CD14-positive monocyte (primary cell): ENCODE measurements at regions of chr4 and their contacts with region 1.

Region 1: DNA sequence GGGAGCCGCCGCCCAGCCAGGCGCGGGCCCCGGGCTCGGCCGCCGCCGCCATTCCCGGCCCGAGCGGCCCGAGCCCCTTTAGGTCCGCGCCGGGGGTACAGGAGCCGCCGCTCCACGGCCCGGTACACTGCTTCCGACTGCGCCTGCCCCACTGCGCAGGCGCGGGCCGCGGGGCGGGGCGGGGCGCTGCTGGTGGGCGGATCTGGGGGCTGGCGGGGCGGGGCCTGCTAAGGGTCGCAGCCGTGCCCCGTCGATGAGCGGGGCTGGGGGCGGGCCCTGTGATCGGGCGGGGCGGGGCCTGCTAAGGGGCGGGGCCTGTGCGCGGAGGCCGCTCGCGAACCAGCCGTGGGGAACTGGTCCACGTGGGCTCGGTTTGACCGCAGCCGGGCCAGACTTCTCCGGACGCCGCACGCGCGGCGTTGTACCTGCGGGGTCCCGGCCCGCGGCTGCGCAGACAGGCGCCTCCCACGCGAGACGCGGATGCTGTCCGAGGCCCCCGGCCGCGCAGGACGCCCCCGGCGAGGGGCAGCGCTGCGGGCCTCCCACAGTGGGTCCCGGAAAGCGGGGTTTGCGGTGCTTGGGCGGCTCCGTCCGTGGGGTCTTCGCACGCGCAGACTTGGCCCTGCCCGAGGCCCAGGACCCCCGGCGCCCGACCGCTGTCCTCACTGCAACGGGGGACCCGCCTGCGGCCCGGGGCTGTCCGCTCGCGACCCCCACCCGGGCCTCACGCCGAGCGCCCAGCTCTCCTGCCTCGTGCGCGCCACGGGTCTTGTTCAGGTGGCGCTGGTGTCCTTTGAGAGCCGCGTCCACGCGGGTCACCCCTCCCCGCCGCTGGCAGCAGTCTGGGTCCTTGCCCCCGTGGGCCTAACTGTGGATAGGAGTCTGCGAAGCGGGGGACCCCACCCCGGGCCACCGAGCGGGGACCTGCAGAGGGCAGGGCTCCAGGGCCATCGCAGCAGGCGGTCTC is at the start of gene DGKQ:
- DNase-seq: peak; percentile 85 to 93 (median 89)
- H3K4me3 ChIP-seq: peak within 1 kb of the TSS; percentile 46 to 90 (median 87)
- H3K4me3 Mint-ChIP-seq: peak within 1 kb of the TSS; percentile 68 to 77
- H3K27ac ChIP-seq: peak within 1 kb of the TSS in 1 of 2 donors; percentile 41
- H3K27ac Mint-ChIP-seq: peak within 1 kb of the TSS in 2 of 7 donors; percentile 58 to 83
- H3K4me1 ChIP-seq: peaks cover 33 to 47% of the 10 kb centered on the region in 2 donors
- H3K4me1 Mint-ChIP-seq: peaks cover 17% of the 10 kb centered on the region
- H3K27me3 ChIP-seq: peaks cover 0 to 14% of the 10 kb centered on the region in 2 donors
- H3K27me3 Mint-ChIP-seq: peaks cover 2 to 18% (median 8%) of the 10 kb centered on the region in 3 donors
- CTCF ChIP-seq: no peak
- polyA plus RNA-seq, gene DGKQ: 0.58 to 23.1 (median 2.4) TPM

Region 2: DNA sequence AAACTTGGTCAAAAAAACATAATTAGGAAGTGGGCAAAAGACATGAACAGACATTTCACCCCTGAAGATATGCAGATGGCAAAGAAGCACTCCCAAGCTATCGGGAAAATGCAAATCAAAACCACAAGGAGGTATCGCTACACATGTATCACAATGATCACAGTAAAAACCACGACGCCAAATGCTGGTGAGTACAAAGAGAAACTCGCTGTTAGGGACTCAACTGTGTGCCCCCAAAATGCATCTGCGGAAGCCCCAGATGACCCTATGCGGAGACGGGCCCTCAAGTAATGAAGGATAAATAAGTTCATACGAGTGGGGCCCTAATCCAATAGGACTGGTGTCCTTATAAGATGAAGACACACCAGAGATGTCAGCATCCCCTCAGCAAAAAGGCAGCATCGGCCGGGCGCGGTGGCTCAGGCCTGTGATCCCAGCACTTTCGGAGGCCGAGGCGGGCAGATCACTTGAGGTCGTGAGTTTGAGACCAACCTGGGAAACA is 51.8 kb before region 1 on chr4:
- intact Hi-C with region 1: no loop called
- DNase-seq: no peak
- H3K4me3 ChIP-seq: no peak overlapping the region
- H3K4me3 Mint-ChIP-seq: no peak overlapping the region
- H3K27ac ChIP-seq: no peak overlapping the region
- H3K27ac Mint-ChIP-seq: peak overlapping the region in 4 of 7 donors; percentile 32 to 54 (median 46)
- H3K4me1 ChIP-seq: peaks cover 36 to 46% of the 10 kb centered on the region in 2 donors
- H3K4me1 Mint-ChIP-seq: peaks cover 82% of the 10 kb centered on the region
- H3K27me3 ChIP-seq: no peaks in the 10 kb centered on the region
- H3K27me3 Mint-ChIP-seq: peaks cover 0 to 2% (median 1%) of the 10 kb centered on the region in 3 donors
- CTCF ChIP-seq: no peak

Region 3: DNA sequence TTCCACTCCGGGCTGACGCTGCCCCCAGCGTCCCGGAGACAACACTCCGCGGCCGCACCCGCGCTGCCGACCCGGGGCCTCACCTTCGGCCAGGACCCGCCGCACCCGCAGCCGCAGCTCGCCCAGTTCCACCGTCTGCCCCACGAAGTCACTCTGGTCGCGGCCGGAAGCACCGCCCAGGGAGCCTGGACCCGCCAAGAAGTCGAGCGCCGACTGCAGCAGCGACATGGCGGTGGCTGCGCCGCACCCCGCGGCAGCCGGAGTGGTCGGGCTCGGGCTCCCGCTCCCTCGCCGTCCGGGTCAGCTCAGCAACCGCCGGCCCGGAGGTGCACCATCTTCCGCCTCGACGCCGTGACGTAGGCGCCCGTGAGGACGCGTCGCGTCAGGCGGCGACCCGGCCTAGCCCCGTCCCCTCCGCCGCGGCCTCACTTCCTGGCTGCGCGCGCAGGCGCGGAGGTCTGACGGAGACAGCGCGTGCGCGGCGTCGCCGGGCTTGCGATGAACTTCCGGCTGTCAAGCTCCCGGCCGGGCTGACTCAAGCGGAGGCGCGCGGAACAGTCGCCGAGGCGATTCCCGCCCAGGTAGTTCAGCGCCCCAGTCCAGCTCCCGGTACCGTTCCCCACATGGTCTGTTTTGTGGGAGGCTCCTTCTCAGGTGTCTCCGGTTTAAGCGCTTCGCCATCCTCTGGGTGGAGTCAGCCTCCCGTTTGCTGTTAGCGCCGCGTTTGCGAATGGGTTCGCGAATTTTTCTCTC is 41.6 kb before region 1 on chr4 and contains the starts of genes GAK and TMEM175:
- intact Hi-C with region 1: loop called (anchors 2 to 5 kb)
- DNase-seq: peak; percentile 96 to 97 (median 97)
- H3K4me3 ChIP-seq: peak within 1 kb of the TSS; percentile 92 to 97 (median 93)
- H3K4me3 Mint-ChIP-seq: peak within 1 kb of the TSS; percentile 96 to 98
- H3K27ac ChIP-seq: peak within 1 kb of the TSS; percentile 84 to 98
- H3K27ac Mint-ChIP-seq: peak within 1 kb of the TSS; percentile 96 to 99 (median 97)
- H3K4me1 ChIP-seq: peaks cover 69 to 76% of the 10 kb centered on the region in 2 donors
- H3K4me1 Mint-ChIP-seq: peaks cover 66% of the 10 kb centered on the region
- H3K27me3 ChIP-seq: no peaks in the 10 kb centered on the region
- H3K27me3 Mint-ChIP-seq: peaks cover 0 to 3% (median 3%) of the 10 kb centered on the region in 3 donors
- CTCF ChIP-seq: no peak
- polyA plus RNA-seq, gene GAK: 40.3 to 88.7 (median 54.9) TPM
- polyA plus RNA-seq, gene TMEM175: 18.9 to 216 (median 20.7) TPM

Region 4: DNA sequence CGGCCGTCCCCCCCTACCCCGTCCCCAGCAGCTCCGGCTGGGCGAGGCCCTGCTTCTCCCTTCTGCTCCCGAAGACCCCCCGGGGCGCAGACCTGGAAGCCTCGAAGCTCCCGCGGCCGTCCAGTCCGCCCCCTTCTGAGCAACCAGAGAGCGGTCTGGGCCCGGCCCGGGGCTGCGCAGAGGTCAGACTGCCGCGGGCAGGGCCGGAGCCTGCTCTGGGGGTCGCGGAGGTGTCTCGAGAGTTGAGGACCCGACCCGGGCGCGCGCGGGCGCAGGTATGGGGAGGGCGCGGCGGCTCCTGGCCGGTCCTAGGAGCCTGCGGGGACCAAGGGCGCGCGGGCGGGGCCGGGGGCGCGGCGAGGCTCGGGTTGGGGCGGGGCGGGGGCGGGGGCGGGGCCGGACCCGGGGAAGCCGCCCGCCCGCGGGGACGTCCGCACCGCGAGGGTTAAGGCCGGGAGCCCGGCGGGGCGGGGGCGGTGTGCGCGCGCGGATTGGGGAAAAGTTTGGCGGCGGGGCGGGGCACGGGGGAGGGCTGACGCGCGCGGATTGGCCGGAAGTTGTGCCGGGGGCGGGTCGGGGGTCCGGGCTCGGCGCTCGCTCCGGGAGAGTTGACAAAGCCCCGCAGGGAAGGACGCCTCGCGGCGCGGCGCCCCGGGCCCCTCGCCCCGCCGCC is 37.4 kb after region 1 on chr4 and contains the start of gene FGFRL1:
- intact Hi-C with region 1: loop called (anchors 2 to 5 kb)
- DNase-seq: peak; percentile 71 to 85 (median 84)
- H3K4me3 ChIP-seq: peak within 1 kb of the TSS; percentile 34 to 82 (median 60)
- H3K4me3 Mint-ChIP-seq: peak within 1 kb of the TSS; percentile 83 to 89
- H3K27ac ChIP-seq: peak within 1 kb of the TSS; percentile 48 to 82
- H3K27ac Mint-ChIP-seq: peak within 1 kb of the TSS; percentile 54 to 90 (median 79)
- H3K4me1 ChIP-seq: peaks cover 23 to 43% of the 10 kb centered on the region in 2 donors
- H3K4me1 Mint-ChIP-seq: peaks cover 18% of the 10 kb centered on the region
- H3K27me3 ChIP-seq: peaks cover 4 to 41% of the 10 kb centered on the region in 2 donors
- H3K27me3 Mint-ChIP-seq: peaks cover 27 to 40% (median 30%) of the 10 kb centered on the region in 3 donors
- CTCF ChIP-seq: no peak
- polyA plus RNA-seq, gene FGFRL1: 0.17 to 77.7 (median 0.28) TPM

Region 5: DNA sequence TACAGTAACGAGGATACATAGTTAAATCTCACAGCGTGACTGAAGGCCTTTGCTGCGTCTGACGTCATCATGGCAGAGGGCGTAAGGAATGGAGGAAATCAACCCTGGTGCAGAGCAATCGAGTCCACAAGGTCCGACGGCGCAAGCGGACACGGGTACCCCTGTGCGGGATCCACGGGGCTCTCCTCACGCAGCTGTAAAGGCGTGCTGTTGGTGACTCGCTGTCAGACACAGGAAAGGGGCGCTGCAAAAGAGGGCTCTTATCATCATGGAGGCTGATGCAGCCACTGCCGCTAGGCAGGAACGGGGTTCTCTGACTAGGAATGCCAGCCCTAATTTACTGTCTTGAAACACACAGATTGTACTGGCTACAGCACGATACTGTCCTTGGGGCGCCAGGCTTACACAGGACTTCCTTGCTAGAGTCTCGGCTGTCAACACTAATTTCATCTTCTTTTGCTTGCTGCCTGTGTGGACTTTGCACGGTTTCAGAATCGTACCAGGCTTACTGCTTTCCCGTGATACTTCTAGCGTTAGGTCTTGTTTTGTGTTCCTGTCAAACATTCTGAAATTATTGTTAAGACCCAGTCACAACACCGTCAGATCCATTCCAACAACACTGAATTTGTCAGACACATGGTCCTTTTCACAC is 126.1 kb after region 1 on chr4:
- intact Hi-C with region 1: no loop called
- DNase-seq: no peak
- H3K4me3 ChIP-seq: no peak overlapping the region
- H3K4me3 Mint-ChIP-seq: no peak overlapping the region
- H3K27ac ChIP-seq: no peak overlapping the region
- H3K27ac Mint-ChIP-seq: no peak overlapping the region
- H3K4me1 ChIP-seq: no peaks in the 10 kb centered on the region
- H3K4me1 Mint-ChIP-seq: no peaks in the 10 kb centered on the region
- H3K27me3 ChIP-seq: no peaks in the 10 kb centered on the region
- H3K27me3 Mint-ChIP-seq: peaks cover 2 to 11% (median 4%) of the 10 kb centered on the region in 3 donors
- CTCF ChIP-seq: no peak